HEK293 (cell line): ENCODE measurements at regions of chr3 and their contacts with region 1.

Region 1: GRCh38 chr3:108489771-108490170 is 20.6 kb downstream of the MYH15 start:
- H3K4me3 ChIP-seq: no peak overlapping the region
- H3K27ac ChIP-seq: no peak overlapping the region
- H3K4me1 ChIP-seq: 0 out of 2 replicates have a peak, but pooled peaks cover 2% of the 10 kb centered on the region
- CTCF ChIP-seq: 0 out of 2 replicates have a peak, but pooled peaks have one; percentile 39

Region 2: DNA sequence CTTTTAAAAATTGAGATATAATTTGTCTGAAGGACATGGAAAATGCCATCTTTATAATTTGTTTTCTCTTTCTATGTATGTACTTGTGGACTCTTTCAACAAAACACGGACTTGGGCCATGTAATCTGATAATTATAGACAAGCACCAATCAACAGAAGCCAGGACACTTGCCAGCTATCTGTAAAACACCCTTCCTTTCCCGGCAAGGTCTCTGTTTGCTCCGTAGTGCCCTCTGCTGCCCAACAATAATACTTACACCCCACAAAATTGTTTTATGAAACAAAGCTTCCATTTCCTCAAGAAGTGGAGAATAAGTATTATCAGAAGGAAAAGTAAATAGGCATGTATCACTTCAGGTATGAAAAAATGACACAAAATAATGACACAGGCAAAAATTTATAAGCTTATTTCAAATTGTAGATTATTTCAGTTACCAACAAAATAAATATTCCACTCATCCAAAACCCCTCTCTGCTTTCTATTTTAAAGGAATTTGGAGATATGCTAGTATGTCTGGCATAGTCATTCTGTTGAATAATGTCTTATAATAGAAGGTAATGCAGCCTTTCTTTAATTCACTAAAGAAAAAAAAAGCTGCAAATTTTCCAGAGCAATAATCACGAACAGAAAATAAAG is 12.1 kb before region 1 on chr3:
- CTCF ChIA-PET with region 1: interaction called, 10 read pairs
- POLR2A ChIA-PET with region 1: no interaction called
- H3K4me3 ChIP-seq: no peak overlapping the region
- H3K27ac ChIP-seq: no peak overlapping the region
- H3K4me1 ChIP-seq: no peaks in the 10 kb centered on the region
- CTCF ChIP-seq: 0 out of 2 replicates have a peak, but pooled peaks have one; percentile 26

Region 3: DNA sequence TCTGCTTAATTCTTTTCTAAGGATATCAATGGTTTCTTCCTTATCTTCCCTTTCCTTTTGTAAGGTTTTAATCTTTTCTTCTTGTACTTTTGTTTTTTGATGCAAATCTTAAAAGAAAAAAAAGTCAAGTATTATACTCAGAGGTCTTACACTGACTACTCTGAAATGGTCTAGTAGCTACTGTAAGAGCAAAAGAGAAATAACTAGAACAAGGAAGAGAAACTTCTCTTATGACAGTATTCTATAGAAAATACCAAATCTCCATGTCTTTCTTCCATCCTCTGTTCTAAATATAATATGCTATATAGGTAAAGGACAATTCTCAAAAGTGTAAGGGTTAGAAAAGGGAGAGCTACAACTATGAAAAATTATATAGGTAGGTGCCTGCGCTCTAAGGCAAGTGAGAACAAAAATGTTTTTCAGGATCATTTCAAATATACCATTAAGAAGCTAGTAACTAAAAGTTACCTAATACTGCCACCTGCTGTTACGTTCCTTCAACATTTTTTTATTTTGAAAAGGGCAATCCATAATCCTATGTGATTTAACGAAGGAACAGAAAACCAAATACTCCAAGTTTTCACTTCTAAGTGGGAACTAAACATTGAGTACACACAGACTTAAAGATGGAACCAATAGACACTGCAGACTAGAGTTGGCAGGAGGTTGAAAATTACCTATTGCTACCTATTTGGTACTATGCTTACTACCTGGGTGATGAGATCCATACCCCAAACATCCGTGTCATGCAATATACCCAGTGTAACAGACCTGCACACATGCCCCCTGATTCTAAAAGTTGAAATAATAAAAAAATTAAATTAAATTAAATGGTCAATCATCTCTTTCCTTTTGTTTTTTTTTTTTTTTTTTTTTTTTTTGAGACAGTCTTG is 62.7 kb after region 1 on chr3:
- CTCF ChIA-PET with region 1: interaction called, 29 read pairs
- POLR2A ChIA-PET with region 1: no interaction called
- H3K4me3 ChIP-seq: no peak overlapping the region
- H3K27ac ChIP-seq: no peak overlapping the region
- H3K4me1 ChIP-seq: no peaks in the 10 kb centered on the region
- CTCF ChIP-seq: no peak

Region 4: GRCh38 chr3:108914774-108915641 is 425.2 kb after region 1 on chr3:
- CTCF ChIA-PET with region 1: interaction called, 10 read pairs
- POLR2A ChIA-PET with region 1: no interaction called
- H3K4me3 ChIP-seq: no peak overlapping the region
- H3K27ac ChIP-seq: no peak overlapping the region
- H3K4me1 ChIP-seq: no peaks in the 10 kb centered on the region
- CTCF ChIP-seq: peak; percentile 50